B cell (primary cell): ENCODE measurements at regions of chr13 and their contacts with region 1.

Region 1: GRCh38 chr13:29923554-29924481 is 73.4 kb upstream of the UBL3 start:
- DNase-seq: peak; percentile 69
- ATAC-seq: peak; percentile 66
- H3K4me3 ChIP-seq: no peak overlapping the region
- H3K4me3 Mint-ChIP-seq: no peak overlapping the region
- H3K27ac ChIP-seq: no peak overlapping the region
- H3K27ac Mint-ChIP-seq: no peak overlapping the region
- H3K4me1 ChIP-seq: peaks cover 0 to 4% of the 10 kb centered on the region in 2 donors
- H3K4me1 Mint-ChIP-seq: no peaks in the 10 kb centered on the region
- H3K27me3 ChIP-seq: peaks cover 0 to 7% (median 0%) of the 10 kb centered on the region in 4 experiments
- H3K27me3 Mint-ChIP-seq: peaks cover 13% of the 10 kb centered on the region
- CTCF ChIP-seq: peak; percentile 89

Region 2: DNA sequence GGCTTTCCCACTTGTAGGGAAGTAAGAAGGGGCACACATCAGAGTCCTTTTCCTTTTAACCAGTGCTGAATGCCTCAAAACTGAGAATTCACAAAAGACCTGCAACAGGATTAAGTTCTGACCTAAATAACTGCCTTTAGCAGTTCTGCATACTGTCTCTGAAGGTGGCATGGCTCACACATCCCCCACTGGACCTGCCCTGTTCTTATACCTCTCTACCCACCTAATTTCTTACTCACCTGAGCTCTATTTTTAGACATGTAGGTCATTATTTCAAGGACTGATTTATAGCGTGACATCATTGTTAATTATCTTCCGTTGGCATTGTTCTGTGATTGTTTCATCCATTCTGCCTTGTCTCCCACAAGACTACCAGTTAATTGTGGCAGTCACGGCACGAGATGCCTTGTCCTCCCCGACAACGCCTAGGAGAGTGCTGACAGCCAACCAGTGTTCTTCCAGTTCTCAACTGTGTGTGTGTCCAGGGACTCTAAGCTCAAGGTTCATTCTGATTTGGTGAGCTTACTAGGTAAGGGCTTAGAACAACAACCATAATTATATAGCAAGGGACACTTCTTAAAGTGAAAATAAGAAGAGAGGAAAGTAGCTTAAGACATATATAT is 46.3 kb before region 1 on chr13:
- CTCF ChIA-PET with region 1: no interaction called
- POLR2A ChIA-PET with region 1: no interaction called
- intact Hi-C with region 1: no loop called
- DNase-seq: no peak
- ATAC-seq: no peak
- H3K4me3 ChIP-seq: no peak overlapping the region
- H3K4me3 Mint-ChIP-seq: no peak overlapping the region
- H3K27ac ChIP-seq: no peak overlapping the region
- H3K27ac Mint-ChIP-seq: no peak overlapping the region
- H3K4me1 ChIP-seq: no peaks in the 10 kb centered on the region
- H3K4me1 Mint-ChIP-seq: no peaks in the 10 kb centered on the region
- H3K27me3 ChIP-seq: peaks cover 0 to 4% (median 2%) of the 10 kb centered on the region in 4 experiments
- H3K27me3 Mint-ChIP-seq: peaks cover 42% of the 10 kb centered on the region
- CTCF ChIP-seq: no peak

Region 3: DNA sequence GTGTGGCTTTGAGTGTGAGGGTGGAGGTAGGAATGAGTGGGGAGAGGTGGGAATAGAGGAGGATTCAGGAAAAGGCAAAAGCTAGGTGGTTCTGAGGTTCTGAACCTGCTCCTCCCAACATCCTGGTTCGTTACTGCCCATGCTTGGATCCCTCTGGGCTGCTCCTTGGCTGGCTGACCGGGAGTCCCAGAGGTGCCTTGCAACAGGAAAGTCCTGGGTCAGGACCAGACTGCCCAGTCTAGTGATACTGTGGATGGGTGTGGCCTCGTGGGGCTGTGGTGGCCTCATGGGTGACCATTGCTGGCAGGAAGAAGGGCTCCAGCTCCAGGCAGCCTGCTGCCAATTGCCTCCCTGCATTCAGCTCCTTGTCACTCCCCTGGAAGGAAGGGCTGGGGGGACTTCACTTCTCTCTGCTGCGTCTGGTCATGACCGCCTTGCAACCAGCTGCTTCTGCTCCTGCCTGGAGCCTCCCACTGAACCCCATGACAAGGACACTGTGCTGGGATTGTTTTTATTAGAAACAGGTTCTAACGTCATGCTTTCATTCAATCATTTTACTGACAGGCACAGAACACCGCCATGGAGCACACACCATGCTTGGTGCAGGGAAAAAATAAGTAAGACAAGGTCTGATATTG is 11.9 kb before region 1 on chr13:
- CTCF ChIA-PET with region 1: interaction called, 18 read pairs
- POLR2A ChIA-PET with region 1: no interaction called
- intact Hi-C with region 1: no loop called
- DNase-seq: no peak
- ATAC-seq: no peak
- H3K4me3 ChIP-seq: no peak overlapping the region
- H3K4me3 Mint-ChIP-seq: no peak overlapping the region
- H3K27ac ChIP-seq: no peak overlapping the region
- H3K27ac Mint-ChIP-seq: no peak overlapping the region
- H3K4me1 ChIP-seq: no peaks in the 10 kb centered on the region
- H3K4me1 Mint-ChIP-seq: no peaks in the 10 kb centered on the region
- H3K27me3 ChIP-seq: peaks cover 0 to 5% (median 0%) of the 10 kb centered on the region in 4 experiments
- H3K27me3 Mint-ChIP-seq: peaks cover 19% of the 10 kb centered on the region
- CTCF ChIP-seq: no peak

Region 4: GRCh38 chr13:29935309-29935981 is 11.6 kb after region 1 on chr13:
- CTCF ChIA-PET with region 1: interaction called, 27 read pairs
- POLR2A ChIA-PET with region 1: no interaction called
- intact Hi-C with region 1: no loop called
- DNase-seq: peak; percentile 51
- ATAC-seq: peak; percentile 77
- H3K4me3 ChIP-seq: peak overlapping the region in 4 of 5 experiments; percentile 34 to 47 (median 38)
- H3K4me3 Mint-ChIP-seq: peak overlapping the region; percentile 79
- H3K27ac ChIP-seq: peak overlapping the region in 1 of 2 donors; percentile 14
- H3K27ac Mint-ChIP-seq: peak overlapping the region; percentile 54
- H3K4me1 ChIP-seq: peaks cover 13 to 19% of the 10 kb centered on the region in 2 donors
- H3K4me1 Mint-ChIP-seq: peaks cover 27% of the 10 kb centered on the region
- H3K27me3 ChIP-seq: no peaks in the 10 kb centered on the region
- H3K27me3 Mint-ChIP-seq: no peaks in the 10 kb centered on the region
- CTCF ChIP-seq: no peak

Region 5: DNA sequence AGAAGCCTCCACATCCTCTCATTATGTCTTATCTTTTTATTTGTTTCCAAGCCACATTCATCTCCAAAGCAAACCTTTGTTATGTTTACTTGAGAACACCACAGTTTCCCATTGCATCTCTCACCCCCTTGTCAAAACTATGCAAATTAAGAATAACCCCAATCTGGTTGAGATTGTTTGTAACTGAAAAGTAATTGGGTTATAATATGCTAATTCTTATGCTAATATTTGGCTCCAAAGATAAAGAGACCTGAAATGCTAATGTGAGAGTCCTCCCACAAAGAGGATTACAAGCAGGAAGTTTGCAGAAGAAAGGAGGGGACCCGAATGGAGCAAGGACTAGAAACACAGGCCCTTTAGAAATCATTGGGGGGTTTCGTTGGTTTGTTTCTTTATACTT is 19.5 kb after region 1 on chr13:
- CTCF ChIA-PET with region 1: interaction called, 25 read pairs
- POLR2A ChIA-PET with region 1: no interaction called
- intact Hi-C with region 1: no loop called
- DNase-seq: no peak
- ATAC-seq: no peak
- H3K4me3 ChIP-seq: no peak overlapping the region
- H3K4me3 Mint-ChIP-seq: no peak overlapping the region
- H3K27ac ChIP-seq: no peak overlapping the region
- H3K27ac Mint-ChIP-seq: no peak overlapping the region
- H3K4me1 ChIP-seq: no peaks in the 10 kb centered on the region
- H3K4me1 Mint-ChIP-seq: no peaks in the 10 kb centered on the region
- H3K27me3 ChIP-seq: no peaks in the 10 kb centered on the region
- H3K27me3 Mint-ChIP-seq: peaks cover 2% of the 10 kb centered on the region
- CTCF ChIP-seq: no peak

Region 6: DNA sequence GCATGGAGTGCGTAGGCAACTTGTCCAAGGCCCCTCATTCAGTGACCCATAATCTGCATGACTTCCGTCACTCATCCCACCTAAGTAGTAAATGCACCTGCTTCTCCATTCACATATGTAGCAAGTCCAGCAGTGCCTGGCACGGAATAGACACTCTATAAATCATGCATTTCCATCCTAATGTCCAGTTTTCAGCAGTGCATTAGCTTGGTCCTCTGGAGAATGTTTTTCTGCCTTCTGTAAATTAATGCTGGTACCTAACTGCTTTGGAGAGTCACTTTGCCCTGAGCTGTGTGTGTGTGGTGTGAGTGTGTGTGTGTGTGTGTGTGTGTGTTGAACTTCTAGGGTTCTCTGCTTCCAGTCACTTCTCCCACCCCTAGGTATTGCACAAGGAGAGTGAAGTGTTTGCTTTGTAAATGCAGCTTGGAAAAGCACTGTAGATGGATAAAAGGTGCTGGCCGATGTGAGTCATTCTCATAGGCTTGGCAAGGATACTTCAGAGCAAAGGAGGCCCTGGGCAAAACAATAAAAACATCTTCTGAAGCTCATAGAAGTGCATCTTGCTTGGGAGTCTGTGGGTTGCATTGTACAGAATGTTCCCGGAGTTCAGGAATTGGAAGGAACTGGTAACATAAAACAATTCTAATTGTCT is 201.7 kb after region 1 on chr13:
- CTCF ChIA-PET with region 1: no interaction called
- POLR2A ChIA-PET with region 1: no interaction called
- intact Hi-C with region 1: no loop called
- DNase-seq: no peak
- ATAC-seq: no peak
- H3K4me3 ChIP-seq: no peak overlapping the region
- H3K4me3 Mint-ChIP-seq: no peak overlapping the region
- H3K27ac ChIP-seq: no peak overlapping the region
- H3K27ac Mint-ChIP-seq: no peak overlapping the region
- H3K4me1 ChIP-seq: peaks cover 16 to 19% of the 10 kb centered on the region in 2 donors
- H3K4me1 Mint-ChIP-seq: peaks cover 23% of the 10 kb centered on the region
- H3K27me3 ChIP-seq: peaks cover 0 to 3% (median 0%) of the 10 kb centered on the region in 4 experiments
- H3K27me3 Mint-ChIP-seq: no peaks in the 10 kb centered on the region
- CTCF ChIP-seq: no peak